ENCODE measurements at regions of chr9 and their contacts with region 1.

Region 1: DNA sequence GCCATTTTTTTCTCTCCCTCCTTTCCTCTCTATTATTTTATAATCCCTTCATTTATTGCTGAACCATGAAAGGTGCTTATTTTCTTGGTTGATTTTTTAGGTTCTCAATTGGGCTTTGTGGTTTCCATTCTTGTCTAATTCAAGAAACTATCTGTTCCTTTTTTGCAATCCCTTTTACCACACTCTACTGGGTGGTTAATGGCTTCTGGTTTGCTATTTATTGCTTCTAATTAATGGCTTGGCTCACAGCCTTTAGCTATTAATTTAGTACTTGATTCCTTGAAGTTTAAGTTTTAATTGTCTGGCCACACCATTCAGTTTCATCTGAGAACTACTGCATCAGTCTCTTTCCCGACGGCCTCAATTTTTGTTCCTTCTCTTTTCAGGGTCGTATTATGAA is 5.6 kb downstream of the FRRS1L start:
- DNase-seq: no peak

Region 2: DNA sequence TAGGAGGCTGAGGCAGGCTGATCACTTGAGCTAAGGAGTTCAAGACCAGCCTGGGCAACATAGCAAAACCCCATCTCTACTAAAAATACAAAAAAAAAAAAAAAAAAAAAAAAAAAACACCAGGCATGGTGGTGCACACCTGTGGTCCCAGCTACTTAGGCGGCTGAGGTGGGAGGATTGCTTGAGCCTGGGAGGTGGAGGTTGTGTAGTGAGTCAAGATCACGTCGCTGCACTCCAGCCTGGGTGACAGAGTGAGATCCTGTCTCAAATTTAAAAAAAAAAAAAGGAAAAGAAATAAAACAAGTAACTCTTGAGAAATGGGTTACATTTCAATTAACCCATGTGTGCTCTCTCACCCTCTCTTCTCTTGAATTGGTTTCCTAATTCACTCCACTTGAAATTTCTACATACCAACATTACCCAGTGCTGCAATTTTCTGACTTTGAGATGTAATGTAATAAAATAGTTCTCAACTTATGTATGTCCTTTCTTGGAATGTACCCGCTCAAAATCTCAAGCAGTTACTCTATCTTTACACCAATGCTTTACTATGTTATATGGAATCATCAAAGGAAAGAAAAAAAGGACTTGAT is 77.6 kb before region 1 on chr9:
- intact Hi-C with region 1: loop called in 1 of 2 experiments (anchors 2 kb)
- DNase-seq: no peak

Region 3: DNA sequence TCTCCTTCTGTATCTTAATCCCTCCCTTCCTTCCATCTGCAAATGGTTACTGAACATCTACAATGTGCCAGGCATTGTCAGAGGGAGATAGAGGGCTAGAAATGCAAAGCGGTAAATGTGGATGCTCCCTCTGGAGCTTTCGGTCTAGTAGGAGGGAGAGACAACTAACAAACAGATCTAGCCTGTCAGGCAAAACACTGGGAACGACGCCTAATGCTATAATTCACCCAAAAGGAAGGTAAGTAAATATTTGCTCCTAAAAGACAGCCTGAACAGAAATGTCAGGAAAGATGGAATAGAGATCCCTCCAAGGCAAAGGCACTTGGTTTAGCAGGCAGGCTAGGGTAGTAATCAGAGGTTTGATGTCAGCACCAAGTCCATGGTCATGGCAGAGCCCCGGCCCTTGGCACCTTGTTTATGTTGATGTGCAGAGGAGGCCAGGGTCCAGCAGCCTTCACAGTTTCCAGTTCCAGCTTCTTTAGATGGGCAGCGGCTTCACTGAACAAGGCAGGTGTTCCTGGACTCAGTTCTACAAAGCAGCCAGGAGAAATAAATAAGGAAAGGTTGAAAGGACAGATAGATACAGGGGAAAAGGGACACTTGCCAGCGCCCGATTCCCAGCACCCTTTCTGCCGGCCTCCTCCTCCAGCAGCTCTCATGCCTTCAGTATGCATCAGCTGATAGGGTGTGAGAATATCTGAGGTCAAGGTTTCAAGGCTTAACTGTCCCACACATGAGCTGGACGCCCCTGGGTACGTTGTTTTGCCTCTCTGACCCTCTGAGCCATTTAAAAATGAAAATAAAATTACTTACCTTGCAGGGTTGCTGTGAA is 52.0 kb after region 1 on chr9:
- intact Hi-C with region 1: loop called in 1 of 2 experiments (anchors 2 kb)
- DNase-seq: no peak

Measured in posterior vena cava (tissue), 2 donors.